ENCODE measurements at regions of chr7 and their contacts with region 1.

Region 1: GRCh38 chr7:65239707-65240352 is 133.8 kb upstream of the ZNF92 start:
- DNase-seq: peak; percentile 25
- H3K4me3 ChIP-seq: peak overlapping the region; percentile 34 to 57 (median 57)
- H3K27ac ChIP-seq: no peak overlapping the region
- H3K4me1 ChIP-seq: peaks cover 3% of the 10 kb centered on the region
- H3K27me3 ChIP-seq: peaks cover 0 to 1% of the 10 kb centered on the region in 2 experiments
- CTCF ChIP-seq: no peak
- POLR2A ChIP-seq: no peak

Region 2: DNA sequence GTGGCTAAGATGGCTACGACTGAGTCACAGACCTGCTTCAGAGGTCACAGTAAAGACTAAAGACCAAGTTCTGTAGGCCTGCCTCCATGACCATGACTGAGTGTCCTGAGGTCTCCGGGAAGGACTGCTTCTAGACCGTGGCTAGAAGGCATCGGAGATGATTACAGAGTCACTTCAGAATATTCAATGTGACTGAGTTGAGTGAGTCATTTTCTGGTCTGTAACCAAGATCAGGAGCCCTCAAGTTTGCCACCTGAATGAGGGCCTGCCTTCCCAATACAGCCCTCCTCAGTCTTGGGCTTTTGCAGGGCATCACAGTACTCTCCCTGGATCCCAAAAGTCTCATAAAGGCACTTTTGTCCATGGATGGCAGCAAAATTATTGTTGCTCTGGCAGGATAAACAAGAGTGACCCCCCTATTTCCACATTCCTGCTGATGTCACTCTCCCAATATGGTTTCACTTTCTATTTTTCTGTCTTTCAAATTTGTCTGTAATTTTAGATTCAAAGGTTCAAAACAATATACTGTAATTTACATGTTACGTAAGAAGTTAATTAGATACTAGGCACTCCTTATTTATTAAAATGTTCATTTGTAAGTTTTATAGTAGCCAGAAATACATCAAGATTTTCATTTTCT is 86.1 kb after region 1 on chr7:
- CTCF ChIA-PET with region 1: no interaction called
- POLR2A ChIA-PET with region 1: no interaction called
- dilution Hi-C with region 1: no loop called
- intact Hi-C with region 1: no loop called
- DNase-seq: peak; percentile 17
- H3K4me3 ChIP-seq: no peak overlapping the region
- H3K27ac ChIP-seq: no peak overlapping the region
- H3K4me1 ChIP-seq: no peaks in the 10 kb centered on the region
- H3K27me3 ChIP-seq: no peaks in the 10 kb centered on the region
- CTCF ChIP-seq: no peak
- POLR2A ChIP-seq: no peak

Region 3: DNA sequence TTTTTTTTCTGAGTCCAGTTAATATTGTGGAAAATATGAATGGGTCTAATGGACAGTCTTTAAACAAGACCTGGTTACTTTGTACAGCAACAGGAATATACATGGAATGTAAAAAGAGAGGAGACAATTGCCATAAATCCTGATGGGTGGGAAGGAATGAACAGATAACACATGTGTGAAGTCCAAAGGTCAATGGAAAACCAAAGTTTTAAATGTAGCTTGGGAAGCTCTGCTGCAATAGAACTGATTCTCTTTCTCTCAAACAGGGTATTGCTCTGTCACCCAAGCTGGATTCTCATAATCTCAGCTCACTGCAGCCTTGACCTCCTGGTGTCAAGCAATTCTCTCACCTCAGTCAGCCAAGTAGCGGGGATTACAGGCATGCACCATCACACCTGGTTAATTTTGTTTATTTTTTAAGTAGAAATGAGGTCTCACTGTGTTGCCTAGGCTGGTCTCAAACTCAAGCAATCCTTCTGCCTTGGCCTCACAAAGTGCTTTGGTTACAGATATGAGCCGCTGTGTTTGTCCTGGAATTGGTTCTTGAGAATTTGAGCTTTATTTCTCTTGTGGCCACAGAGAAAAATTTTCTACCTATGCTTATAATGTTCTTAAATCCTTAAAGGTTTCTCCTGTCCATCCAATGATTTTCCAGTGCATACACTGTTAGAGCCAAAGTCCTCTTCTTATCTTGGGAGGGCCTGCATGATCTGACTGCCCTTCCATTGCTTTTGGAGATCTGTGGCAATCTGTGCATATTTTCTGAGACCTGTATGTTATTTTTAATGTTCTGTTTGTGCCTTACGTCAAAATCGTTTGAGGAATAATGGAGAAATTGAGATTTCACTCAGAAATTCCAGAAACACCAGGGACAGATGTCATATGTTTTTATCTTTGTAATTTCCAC is 103.1 kb after region 1 on chr7:
- CTCF ChIA-PET with region 1: no interaction called
- POLR2A ChIA-PET with region 1: no interaction called
- dilution Hi-C with region 1: no loop called
- intact Hi-C with region 1: no loop called
- DNase-seq: no peak
- H3K4me3 ChIP-seq: no peak overlapping the region
- H3K27ac ChIP-seq: no peak overlapping the region
- H3K4me1 ChIP-seq: no peaks in the 10 kb centered on the region
- H3K27me3 ChIP-seq: no peaks in the 10 kb centered on the region
- CTCF ChIP-seq: no peak
- POLR2A ChIP-seq: no peak

Region 4: DNA sequence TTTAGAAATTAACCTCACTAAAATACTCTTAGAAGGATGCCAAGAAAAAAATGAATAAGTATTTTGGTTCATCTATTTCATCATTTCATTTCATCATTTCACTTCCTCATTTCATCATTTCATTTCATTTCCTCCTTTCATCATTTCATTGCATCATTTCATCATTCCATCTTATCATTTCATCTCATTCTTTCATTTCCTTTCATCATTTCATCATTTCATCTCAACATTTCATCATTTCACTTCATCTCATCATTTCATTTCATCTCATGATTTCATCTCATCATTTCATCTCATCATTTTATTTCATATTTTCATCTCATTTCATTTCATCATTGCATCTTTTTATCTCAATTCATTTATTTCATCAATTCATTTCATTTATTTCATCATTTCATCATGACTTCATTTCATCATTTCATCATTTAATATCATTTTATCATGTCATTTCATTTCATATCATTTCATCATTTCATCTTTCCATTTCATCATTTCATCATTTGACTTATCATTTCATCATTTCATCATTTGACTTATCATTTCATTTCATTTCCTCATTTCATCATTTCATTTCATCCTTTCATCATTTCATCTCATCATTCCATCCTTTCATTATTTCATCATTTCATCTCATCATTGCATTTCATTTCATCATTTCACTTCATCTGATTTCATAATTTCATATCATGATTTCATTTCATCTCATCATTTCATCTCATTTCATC is 263.8 kb after region 1 on chr7:
- CTCF ChIA-PET with region 1: no interaction called
- POLR2A ChIA-PET with region 1: no interaction called
- dilution Hi-C with region 1: no loop called
- intact Hi-C with region 1: loop called (anchors 5 kb)
- DNase-seq: no peak
- H3K4me3 ChIP-seq: no peak overlapping the region
- H3K27ac ChIP-seq: no peak overlapping the region
- H3K4me1 ChIP-seq: no peaks in the 10 kb centered on the region
- H3K27me3 ChIP-seq: peaks cover 0 to 2% of the 10 kb centered on the region in 2 experiments
- CTCF ChIP-seq: no peak
- POLR2A ChIP-seq: no peak